ENCODE measurements at regions of chr18 and their contacts with region 1.

Region 1: DNA sequence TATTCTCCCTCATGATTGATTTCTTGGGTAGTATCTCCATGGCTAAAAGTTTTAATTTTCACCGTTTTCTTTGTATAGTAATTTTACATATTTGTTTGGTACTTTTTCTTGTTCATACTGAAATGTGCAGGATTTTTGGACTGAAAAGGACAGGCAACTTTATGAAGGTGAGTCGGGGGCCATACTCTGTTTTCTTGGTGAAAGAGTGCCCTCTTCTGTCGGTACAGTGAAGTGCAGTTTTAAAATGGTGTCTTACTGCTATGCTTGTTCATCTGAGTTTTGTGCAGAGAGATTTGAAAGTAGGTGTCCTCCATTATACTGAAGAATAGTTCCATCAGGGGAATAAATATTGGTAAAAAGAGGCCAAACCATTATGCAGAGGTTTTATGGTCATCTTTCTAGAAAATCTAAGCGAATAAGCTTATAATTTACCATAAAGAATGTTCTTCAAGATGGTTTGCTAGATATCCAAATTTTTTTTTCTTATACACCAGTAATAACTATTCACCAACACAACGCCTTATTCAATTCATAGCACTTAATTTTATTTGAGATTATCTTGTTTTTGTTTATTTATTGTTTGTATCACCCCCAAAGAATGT is 8.7 kb upstream of the SERPINB13 start:
- DNase-seq: peak; percentile 58
- H3K4me3 Mint-ChIP-seq: no peak overlapping the region
- H3K27ac Mint-ChIP-seq: no peak overlapping the region
- H3K4me1 Mint-ChIP-seq: no peaks in the 10 kb centered on the region
- H3K27me3 Mint-ChIP-seq: no peaks in the 10 kb centered on the region
- CTCF ChIP-seq: peak; percentile 74

Region 2: GRCh38 chr18:63518178-63519012 is 60.1 kb before region 1 on chr18:
- CTCF ChIA-PET with region 1: interaction called, 33 read pairs
- intact Hi-C with region 1: loop called (anchors 1 kb)
- DNase-seq: peak; percentile 69
- H3K4me3 Mint-ChIP-seq: no peak overlapping the region
- H3K27ac Mint-ChIP-seq: no peak overlapping the region
- H3K4me1 Mint-ChIP-seq: peaks cover 15% of the 10 kb centered on the region
- H3K27me3 Mint-ChIP-seq: no peaks in the 10 kb centered on the region
- CTCF ChIP-seq: peak; percentile 57

Region 3: DNA sequence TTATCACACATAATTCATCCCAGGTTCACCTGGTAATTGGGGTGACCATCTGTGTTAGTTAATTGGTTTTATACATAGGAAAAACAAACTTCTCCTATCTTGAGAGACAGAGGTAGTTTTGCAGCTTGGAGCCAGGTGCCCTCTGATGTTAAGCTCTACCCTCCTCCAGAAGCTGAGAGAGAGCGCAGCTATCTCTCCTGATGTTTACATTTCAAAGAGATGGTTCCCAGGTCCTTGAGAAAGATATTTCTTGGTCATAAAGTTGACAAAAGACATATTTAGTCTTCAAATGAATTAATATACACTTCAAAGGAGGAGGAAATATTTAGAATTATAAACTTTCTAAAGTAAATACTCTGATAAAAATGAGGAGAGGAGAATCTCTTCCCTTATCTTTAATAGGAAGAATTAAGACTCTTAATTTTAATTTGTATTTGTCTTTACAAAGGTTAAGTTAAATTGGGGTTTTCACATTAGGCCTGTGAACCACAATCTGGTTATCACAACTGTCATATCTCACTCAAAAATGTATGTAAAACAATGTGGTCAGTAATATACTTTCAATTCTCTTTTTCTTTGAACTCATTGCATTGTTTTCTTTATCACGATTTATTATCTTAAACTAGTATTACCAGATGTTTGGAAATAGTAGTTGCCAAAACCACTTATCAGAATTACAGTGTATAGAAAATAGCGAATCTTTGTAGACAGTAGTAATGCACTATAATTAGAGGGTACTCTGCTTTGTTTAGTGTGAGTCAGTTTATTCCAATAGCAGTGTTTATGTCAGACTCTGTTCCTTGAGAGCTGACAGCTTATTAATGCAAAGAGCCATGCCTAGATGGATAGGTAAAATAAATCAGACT is 38.8 kb after region 1 on chr18:
- CTCF ChIA-PET with region 1: no interaction called
- intact Hi-C with region 1: no loop called
- DNase-seq: no peak
- H3K4me3 Mint-ChIP-seq: no peak overlapping the region
- H3K27ac Mint-ChIP-seq: no peak overlapping the region
- H3K4me1 Mint-ChIP-seq: no peaks in the 10 kb centered on the region
- H3K27me3 Mint-ChIP-seq: peaks cover 14% of the 10 kb centered on the region
- CTCF ChIP-seq: no peak

Measured in Calu3 (cell line).